ENCODE measurements at regions of chr3 and their contacts with region 1.

Region 1: GRCh38 chr3:185572183-185572582 is 13.9 kb upstream of the SENP2 start:
- DNase-seq: no peak
- H3K4me3 Mint-ChIP-seq: no peak overlapping the region
- H3K27ac Mint-ChIP-seq: no peak overlapping the region
- H3K4me1 Mint-ChIP-seq: no peaks in the 10 kb centered on the region
- H3K27me3 Mint-ChIP-seq: peaks cover 3% of the 10 kb centered on the region

Region 2: GRCh38 chr3:185250247-185250646 is 321.9 kb before region 1 on chr3:
- CTCF ChIA-PET with region 1: no interaction called
- DNase-seq: no peak
- H3K4me3 Mint-ChIP-seq: no peak overlapping the region
- H3K27ac Mint-ChIP-seq: no peak overlapping the region
- H3K4me1 Mint-ChIP-seq: peaks cover 2% of the 10 kb centered on the region
- H3K27me3 Mint-ChIP-seq: peaks cover 10% of the 10 kb centered on the region

Region 3: GRCh38 chr3:185282696-185283394 is 289.3 kb before region 1 on chr3:
- CTCF ChIA-PET with region 1: no interaction called
- DNase-seq: peak; percentile 97
- H3K4me3 Mint-ChIP-seq: peak overlapping the region; percentile 89
- H3K27ac Mint-ChIP-seq: peak overlapping the region; percentile 85
- H3K4me1 Mint-ChIP-seq: peaks cover 32% of the 10 kb centered on the region
- H3K27me3 Mint-ChIP-seq: no peaks in the 10 kb centered on the region

Region 4: DNA sequence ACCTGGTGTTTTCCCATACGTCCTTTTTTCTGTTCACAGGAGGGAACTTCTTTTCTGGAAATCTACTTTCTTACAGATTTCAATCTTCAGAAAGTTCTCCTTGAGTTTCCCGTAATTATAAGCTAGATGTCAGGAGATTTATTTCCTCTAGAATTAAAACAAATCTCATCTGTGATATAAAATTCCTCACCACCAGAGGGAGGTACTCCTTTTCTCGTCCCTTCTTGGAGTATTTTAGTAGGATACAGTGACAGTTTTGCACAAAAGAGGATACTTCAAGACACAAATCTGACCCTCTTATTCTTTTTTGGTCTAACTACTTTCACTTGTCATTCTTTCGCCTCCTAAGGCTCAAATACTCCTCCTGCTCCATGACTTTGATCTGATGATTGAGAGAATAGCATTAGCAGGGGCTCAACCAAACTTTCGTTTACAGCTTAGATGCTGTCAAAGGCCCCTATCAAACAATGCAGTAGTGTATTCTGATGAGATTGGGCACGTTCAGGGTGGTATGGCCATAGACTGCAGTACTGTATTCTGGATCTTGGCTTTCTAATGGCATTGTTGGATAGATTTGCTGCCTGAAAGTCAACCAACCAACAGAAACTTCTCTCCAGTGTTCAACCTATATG is 111.3 kb before region 1 on chr3:
- CTCF ChIA-PET with region 1: interaction called, 18 read pairs
- DNase-seq: no peak
- H3K4me3 Mint-ChIP-seq: no peak overlapping the region
- H3K27ac Mint-ChIP-seq: no peak overlapping the region
- H3K4me1 Mint-ChIP-seq: no peaks in the 10 kb centered on the region
- H3K27me3 Mint-ChIP-seq: no peaks in the 10 kb centered on the region

Region 5: GRCh38 chr3:185585859-185586685 is 13.9 kb after region 1 on chr3 and contains the start of gene SENP2:
- CTCF ChIA-PET with region 1: interaction called, 11 read pairs
- DNase-seq: peak; percentile 100
- H3K4me3 Mint-ChIP-seq: peak within 1 kb of the TSS; percentile 77
- H3K27ac Mint-ChIP-seq: peak within 1 kb of the TSS; percentile 89
- H3K4me1 Mint-ChIP-seq: peaks cover 34% of the 10 kb centered on the region
- H3K27me3 Mint-ChIP-seq: peaks cover 6% of the 10 kb centered on the region

Region 6: DNA sequence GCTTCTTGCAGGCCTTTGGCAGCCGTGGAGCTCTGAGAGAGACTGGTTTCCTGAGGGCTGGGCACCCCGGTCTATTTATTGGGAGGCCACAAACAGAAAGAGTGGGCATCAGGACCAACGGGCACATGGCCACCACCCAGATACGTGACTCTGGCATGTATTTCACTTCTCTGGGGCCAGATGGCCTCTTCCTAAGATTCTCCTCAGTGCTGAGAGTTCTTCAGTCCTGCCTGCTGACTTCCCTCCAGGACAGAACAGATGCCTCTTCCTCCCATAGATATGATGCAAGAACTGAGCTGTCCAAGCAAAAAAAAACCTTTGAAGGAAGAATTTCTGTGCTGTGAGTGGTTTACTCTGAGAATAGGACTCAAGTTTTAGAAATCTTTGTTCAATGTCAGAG is 144.9 kb after region 1 on chr3:
- CTCF ChIA-PET with region 1: no interaction called
- DNase-seq: no peak
- H3K4me3 Mint-ChIP-seq: no peak overlapping the region
- H3K27ac Mint-ChIP-seq: no peak overlapping the region
- H3K4me1 Mint-ChIP-seq: no peaks in the 10 kb centered on the region
- H3K27me3 Mint-ChIP-seq: peaks cover 22% of the 10 kb centered on the region